Psoas muscle (tissue), 8 donors: ENCODE measurements at regions of chr5 and their contacts with region 1.

Region 1: GRCh38 chr5:108788142-108788541 is 40.4 kb downstream of the FER start:
- DNase-seq: peak; percentile 43 to 84
- ATAC-seq: peak; percentile 88 to 100 (median 96)
- H3K4me3 ChIP-seq: peak overlapping the region; percentile 13
- H3K27ac ChIP-seq: no peak overlapping the region
- H3K4me1 ChIP-seq: peaks cover 6% of the 10 kb centered on the region
- H3K27me3 ChIP-seq: no peaks in the 10 kb centered on the region
- CTCF ChIP-seq: no peak

Region 2: GRCh38 chr5:108418197-108418596 is 369.9 kb before region 1 on chr5:
- intact Hi-C with region 1: no loop called
- DNase-seq: peak; percentile 54 to 89
- ATAC-seq: peak; percentile 95 to 99 (median 98)
- H3K4me3 ChIP-seq: peak overlapping the region; percentile 19
- H3K27ac ChIP-seq: no peak overlapping the region
- H3K4me1 ChIP-seq: peaks cover 3% of the 10 kb centered on the region
- H3K27me3 ChIP-seq: no peaks in the 10 kb centered on the region
- CTCF ChIP-seq: no peak

Region 3: GRCh38 chr5:108753877-108754276 is 34.3 kb before region 1 on chr5:
- intact Hi-C with region 1: loop called in 1 of 2 experiments (anchors 5 kb)
- DNase-seq: no peak
- ATAC-seq: no peak
- H3K4me3 ChIP-seq: no peak overlapping the region
- H3K27ac ChIP-seq: no peak overlapping the region
- H3K4me1 ChIP-seq: peaks cover 4% of the 10 kb centered on the region
- H3K27me3 ChIP-seq: no peaks in the 10 kb centered on the region
- CTCF ChIP-seq: no peak